ENCODE measurements at regions of chr17 and their contacts with region 1.

Region 1: GRCh38 chr17:41811549-41812380 is at the start of gene P3H4:
- DNase-seq: peak; percentile 74
- H3K4me3 Mint-ChIP-seq: peak within 1 kb of the TSS; percentile 95
- H3K27ac Mint-ChIP-seq: peak within 1 kb of the TSS; percentile 85
- H3K4me1 Mint-ChIP-seq: peaks cover 19% of the 10 kb centered on the region
- H3K27me3 Mint-ChIP-seq: no peaks in the 10 kb centered on the region
- CTCF ChIP-seq: peak; percentile 52
- total RNA-seq, gene P3H4: 36.4 and 41.5 TPM in 2 replicates

Region 2: GRCh38 chr17:41792845-41793783 is 18.7 kb before region 1 on chr17:
- CTCF ChIA-PET with region 1: no interaction called
- POLR2A ChIA-PET with region 1: interaction called, 599 read pairs
- intact Hi-C with region 1: no loop called
- DNase-seq: peak; percentile 82
- H3K4me3 Mint-ChIP-seq: peak overlapping the region; percentile 71
- H3K27ac Mint-ChIP-seq: peak overlapping the region; percentile 96
- H3K4me1 Mint-ChIP-seq: peaks cover 30% of the 10 kb centered on the region
- H3K27me3 Mint-ChIP-seq: no peaks in the 10 kb centered on the region
- CTCF ChIP-seq: no peak

Region 3: DNA sequence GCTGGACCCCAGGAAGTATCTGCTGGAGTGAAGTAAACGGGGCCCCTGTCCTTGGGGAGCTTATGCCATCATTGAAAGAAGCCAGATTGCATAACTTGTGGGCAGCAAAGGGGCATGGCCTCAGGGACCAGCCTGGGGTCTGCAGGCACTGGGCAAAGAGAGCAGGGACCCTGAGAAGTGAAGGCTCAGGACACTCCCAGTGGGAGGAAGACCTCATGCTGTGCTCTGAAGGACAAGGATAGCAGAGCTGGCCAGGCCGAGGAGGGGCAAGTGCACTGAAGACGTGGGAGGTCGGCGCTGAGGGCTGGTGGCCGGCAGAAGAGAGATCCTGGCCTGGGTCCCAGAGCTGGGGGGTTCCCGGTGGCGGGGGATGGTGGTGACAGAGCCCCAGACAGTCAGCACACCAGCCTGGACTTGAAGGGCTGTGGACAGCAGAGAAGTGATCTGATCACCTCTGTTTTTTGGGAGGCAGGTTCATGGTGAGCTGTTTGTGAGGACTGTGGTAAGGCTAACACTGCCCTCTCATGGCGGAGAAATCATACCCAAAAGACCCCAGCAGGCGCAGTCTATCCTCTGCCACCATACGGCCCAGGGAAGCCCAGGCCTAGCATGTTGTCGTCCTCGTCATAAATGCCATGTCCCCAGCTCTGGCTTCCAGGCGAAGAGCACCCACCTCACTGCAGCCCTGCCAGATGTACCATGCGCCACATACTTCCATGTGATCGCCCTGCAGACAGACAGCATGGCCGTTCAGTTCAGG is 147.8 kb after region 1 on chr17:
- CTCF ChIA-PET with region 1: no interaction called
- POLR2A ChIA-PET with region 1: interaction called, 3 read pairs
- intact Hi-C with region 1: loop called (anchors 2 kb)
- DNase-seq: peak; percentile 55
- H3K4me3 Mint-ChIP-seq: no peak overlapping the region
- H3K27ac Mint-ChIP-seq: peak overlapping the region; percentile 16
- H3K4me1 Mint-ChIP-seq: no peaks in the 10 kb centered on the region
- H3K27me3 Mint-ChIP-seq: no peaks in the 10 kb centered on the region
- CTCF ChIP-seq: peak; percentile 44

Measured in MCF 10A (cell line).